IMR-90 (cell line): ENCODE measurements at regions of chr11 and their contacts with region 1.

Region 1: GRCh38 chr11:118621071-118621783 is 13.8 kb downstream of the PHLDB1 start:
- DNase-seq: peak; percentile 86
- ATAC-seq: peak; percentile 62
- H3K4me3 ChIP-seq: peak overlapping the region; percentile 87
- H3K27ac ChIP-seq: peak overlapping the region; percentile 95
- H3K4me1 ChIP-seq: peaks cover 43% of the 10 kb centered on the region
- H3K27me3 ChIP-seq: no peaks in the 10 kb centered on the region
- CTCF ChIP-seq: no peak
- POLR2A ChIP-seq: peak; percentile 59
- RAD21 ChIP-seq: no peak

Region 2: GRCh38 chr11:117560780-117561530 is 1060.3 kb before region 1 on chr11:
- CTCF ChIA-PET with region 1: no interaction called
- POLR2A ChIA-PET with region 1: no interaction called
- dilution Hi-C with region 1: no loop called
- in situ Hi-C with region 1: no loop called
- intact Hi-C with region 1: no loop called
- DNase-seq: no peak
- ATAC-seq: no peak
- H3K4me3 ChIP-seq: no peak overlapping the region
- H3K27ac ChIP-seq: no peak overlapping the region
- H3K4me1 ChIP-seq: no peaks in the 10 kb centered on the region
- H3K27me3 ChIP-seq: peaks cover 15% of the 10 kb centered on the region
- CTCF ChIP-seq: no peak
- POLR2A ChIP-seq: no peak
- RAD21 ChIP-seq: no peak

Region 3: DNA sequence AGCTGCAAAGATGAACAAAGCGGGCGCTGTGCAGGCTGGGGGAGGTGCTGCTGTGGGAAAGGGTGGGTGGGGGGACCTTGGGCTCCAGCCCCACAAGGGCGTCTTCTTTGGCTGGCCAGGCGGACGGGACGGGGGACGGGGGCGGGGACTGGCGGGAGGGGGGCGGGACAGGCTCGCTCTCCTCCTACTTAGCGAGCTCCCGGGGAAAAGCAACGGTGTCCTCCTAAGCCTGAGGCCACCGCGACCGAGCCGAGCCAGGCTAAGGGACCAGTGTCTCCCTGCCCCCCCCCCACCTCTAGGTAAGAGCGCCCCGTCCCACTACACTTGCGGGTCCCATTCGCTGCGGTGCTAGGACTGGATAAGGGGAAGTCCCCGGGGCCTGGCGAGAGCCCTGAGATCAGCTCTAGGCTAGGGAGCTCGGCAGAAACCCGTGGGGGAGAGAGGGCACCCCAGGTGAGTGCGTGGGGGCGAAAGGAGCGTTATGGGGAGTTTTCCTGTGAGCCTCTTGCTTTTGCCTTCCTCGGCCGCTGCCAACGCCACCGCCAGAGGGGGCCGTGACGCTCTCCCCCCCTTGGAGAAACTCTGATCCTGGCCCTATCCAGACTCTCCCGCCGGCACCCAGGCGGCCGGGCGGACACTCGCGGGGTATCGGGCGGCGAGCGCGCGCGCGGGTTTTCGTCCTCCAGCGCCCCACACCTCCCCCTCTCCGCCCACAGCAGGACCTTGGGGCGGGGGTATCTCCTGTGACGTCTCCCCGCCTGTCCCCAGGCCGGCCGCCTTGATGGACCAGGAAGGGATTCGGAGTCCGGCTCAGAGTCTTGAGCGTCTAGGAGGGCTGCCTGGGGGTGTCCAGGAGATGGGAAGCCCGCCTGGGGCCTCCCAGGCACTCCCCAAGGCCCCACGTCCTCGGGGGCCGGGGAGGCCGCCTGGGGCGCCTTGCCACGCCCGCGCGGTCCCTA is 13.5 kb before region 1 on chr11 and contains the start of gene PHLDB1:
- CTCF ChIA-PET with region 1: interaction called, 9 read pairs
- POLR2A ChIA-PET with region 1: interaction called, 36 read pairs
- dilution Hi-C with region 1: no loop called
- in situ Hi-C with region 1: no loop called
- intact Hi-C with region 1: loop called (anchors 1 kb)
- DNase-seq: peak; percentile 67
- ATAC-seq: peak; percentile 35
- H3K4me3 ChIP-seq: peak within 1 kb of the TSS; percentile 93
- H3K27ac ChIP-seq: peak within 1 kb of the TSS; percentile 90
- H3K4me1 ChIP-seq: peaks cover 40% of the 10 kb centered on the region
- H3K27me3 ChIP-seq: no peaks in the 10 kb centered on the region
- CTCF ChIP-seq: peak; percentile 60
- POLR2A ChIP-seq: peak; percentile 88
- RAD21 ChIP-seq: peak; percentile 37
- total RNA-seq, gene PHLDB1: 40.0 and 41.7 TPM in 2 replicates

Region 4: GRCh38 chr11:118643142-118643994 is 22.1 kb after region 1 on chr11:
- CTCF ChIA-PET with region 1: no interaction called
- POLR2A ChIA-PET with region 1: interaction called, 20 read pairs
- dilution Hi-C with region 1: no loop called
- in situ Hi-C with region 1: no loop called
- intact Hi-C with region 1: no loop called
- DNase-seq: no peak
- ATAC-seq: no peak
- H3K4me3 ChIP-seq: no peak overlapping the region
- H3K27ac ChIP-seq: no peak overlapping the region
- H3K4me1 ChIP-seq: 0 out of 2 replicates have a peak, but pooled peaks cover 1% of the 10 kb centered on the region
- H3K27me3 ChIP-seq: no peaks in the 10 kb centered on the region
- CTCF ChIP-seq: no peak
- POLR2A ChIP-seq: no peak
- RAD21 ChIP-seq: no peak